ENCODE measurements at regions of chr22 and their contacts with region 1.

Region 1: DNA sequence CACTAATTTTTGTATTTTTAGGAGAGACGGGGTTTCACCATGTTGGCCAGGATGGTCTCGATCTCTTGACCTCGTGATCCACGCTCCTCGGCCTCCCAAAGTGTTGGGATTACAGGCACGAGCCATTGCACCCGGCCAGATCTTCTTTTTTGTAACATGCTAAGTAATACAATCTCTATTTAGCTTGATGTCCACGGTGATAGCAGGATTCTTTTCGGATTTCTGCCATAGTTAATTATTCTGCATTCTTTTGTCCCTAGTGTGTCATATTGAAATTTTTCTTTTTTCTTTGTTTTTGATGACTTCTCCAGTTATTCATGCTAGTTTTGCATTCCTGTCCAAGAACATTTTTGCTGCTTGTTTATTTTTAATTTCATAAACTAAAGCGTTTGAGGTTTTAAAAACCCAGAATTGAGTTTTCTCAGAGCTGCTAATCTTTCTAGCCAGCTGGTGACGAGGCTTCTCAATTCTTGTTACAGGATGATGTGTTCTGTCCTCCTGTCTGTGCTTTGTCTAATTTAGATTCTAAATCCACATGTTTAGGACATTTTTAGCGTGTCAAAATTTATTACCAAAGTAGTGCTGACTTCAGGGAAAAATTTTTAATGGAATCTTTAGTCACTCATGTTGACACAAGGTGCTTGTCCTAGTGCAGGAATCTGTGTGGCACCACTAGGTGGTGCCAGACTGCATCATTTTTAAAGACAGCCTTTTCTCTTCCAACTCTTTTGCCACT is 21.8 kb downstream of the NF2 start:
- DNase-seq: peak; percentile 73

Region 2: DNA sequence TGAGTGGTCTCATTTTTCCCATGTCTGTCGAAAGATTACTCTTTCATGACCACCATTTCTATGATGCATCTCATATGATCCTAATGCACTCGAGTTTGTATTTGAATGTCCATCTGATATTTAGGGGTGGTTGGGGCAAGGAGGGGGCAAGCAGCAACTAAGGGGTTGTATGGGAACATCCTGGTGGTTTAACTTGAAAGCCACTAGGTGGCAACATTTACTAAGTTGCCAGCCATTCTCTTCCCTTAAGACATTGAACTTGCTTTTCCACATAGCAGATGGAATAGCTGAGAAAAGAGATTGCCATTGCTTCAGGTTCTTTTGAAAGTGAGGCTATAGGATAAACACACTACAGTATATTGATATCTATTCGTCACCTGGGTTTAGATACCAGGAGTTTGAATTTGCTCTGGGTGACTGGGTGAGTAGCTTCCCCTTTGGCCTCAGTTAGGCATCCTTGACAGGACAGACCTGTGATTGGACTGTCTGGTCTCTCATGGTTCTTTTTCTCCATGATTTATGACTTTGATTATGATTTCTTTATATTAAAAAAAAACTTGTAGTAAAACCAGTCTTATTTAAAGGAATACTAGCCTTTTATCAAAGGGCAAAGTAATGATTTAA is 10.6 kb after region 1 on chr22:
- CTCF ChIA-PET with region 1: interaction called, 16 read pairs
- POLR2A ChIA-PET with region 1: no interaction called
- DNase-seq: peak; percentile 70

Measured in HEK293T (cell line).